Right cardiac atrium (tissue), 5 donors: ENCODE measurements at regions of chr9 and their contacts with region 1.

Region 1: DNA sequence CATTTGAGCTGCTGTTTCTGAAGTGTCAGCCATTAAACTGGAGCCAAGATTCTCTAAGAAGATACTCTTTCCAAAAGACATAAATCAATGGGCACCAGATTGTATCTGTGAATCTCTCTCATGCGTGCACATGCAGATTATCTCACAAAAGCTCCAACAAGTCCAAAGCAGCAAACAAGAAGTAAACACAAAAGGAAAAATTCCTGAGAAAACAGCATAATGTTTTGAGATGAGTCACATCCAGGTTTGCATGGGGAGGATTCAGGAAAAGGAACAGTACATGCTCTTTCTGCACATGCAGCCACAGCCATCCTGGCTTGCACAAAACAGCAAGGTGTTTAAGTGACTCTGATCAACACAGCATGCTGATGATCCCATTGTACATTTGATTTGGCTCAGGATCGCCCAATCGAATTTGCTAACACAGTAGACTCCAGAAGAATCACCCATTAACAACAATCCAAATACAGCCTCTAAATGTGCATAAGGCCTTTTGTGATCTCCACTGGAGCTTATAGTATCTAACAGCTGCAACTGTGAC is 143.1 kb downstream of the ELAVL2 start:
- DNase-seq: no peak
- ATAC-seq: no peak
- H3K4me3 ChIP-seq: no peak overlapping the region
- H3K27ac ChIP-seq: no peak overlapping the region
- H3K4me1 ChIP-seq: no peaks in the 10 kb centered on the region
- H3K27me3 ChIP-seq: no peaks in the 10 kb centered on the region

Region 2: DNA sequence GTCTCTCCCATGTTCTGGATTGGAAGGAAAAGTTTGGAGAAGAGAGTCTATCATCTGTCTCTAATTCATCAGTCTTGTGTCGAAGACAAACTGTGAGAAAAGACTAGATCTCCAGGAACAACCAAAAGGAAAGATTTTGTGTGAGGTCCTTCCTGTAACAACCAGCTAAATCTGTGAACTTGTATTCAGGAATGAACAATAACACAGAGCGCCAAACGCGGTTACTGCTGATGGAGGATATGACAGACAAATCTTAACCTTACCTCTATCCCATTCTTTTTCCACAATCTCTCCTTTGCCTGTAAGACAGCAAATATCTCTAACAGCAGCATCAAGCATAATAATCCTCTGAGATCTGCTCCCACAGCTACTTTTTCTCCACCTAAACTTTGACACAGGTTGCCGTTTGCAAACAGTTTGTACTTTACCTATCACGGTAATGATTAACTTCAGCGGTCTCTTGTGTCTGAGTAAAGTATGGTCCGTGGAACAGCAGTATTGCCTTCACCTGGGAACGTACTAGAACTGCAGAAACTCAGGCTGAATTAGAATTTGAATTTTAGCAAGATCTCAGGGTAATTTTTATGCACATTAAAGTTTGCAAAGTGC is 244.6 kb before region 1 on chr9:
- intact Hi-C with region 1: no loop called
- DNase-seq: no peak
- ATAC-seq: no peak
- H3K4me3 ChIP-seq: no peak overlapping the region
- H3K27ac ChIP-seq: no peak overlapping the region
- H3K4me1 ChIP-seq: no peaks in the 10 kb centered on the region
- H3K27me3 ChIP-seq: no peaks in the 10 kb centered on the region

Region 3: DNA sequence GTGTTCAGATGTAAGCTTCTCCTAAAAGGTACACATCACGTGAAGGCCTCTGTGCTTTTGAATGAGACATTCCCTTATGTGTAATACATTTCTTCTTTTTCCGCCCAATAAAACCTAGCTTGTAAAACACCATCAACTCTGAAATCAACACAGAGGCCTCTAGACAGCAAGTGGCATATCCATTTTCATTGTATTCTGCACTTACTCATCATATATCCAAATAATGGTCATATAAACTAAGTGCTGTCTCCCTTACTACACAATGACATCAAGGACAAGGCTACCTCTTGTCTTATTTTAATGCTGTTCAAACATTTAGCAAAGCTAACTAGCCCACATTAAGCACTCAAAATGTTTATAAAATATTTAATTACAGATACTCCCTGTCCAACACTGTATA is 34.5 kb after region 1 on chr9:
- intact Hi-C with region 1: no loop called
- DNase-seq: no peak
- ATAC-seq: no peak
- H3K4me3 ChIP-seq: no peak overlapping the region
- H3K27ac ChIP-seq: no peak overlapping the region
- H3K4me1 ChIP-seq: no peaks in the 10 kb centered on the region
- H3K27me3 ChIP-seq: no peaks in the 10 kb centered on the region

Region 4: DNA sequence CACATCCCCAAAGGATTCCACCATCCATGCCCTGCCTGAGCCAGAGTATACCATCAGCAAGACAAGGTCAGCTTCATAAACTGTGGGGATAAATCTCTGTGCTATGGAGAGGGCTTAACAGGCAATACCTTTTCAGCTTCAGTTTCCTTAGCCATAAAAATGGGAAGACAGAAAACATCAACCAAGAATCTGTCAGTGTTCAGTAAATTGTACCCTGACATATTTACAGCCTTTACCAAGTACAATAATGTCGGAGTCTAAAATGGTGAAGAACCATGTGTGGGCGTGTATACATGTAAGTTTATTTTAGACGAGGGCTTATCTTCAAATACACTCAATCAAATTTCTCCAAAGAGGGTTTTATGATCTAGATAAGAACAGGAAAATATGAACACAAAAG is 48.4 kb after region 1 on chr9:
- intact Hi-C with region 1: loop called in 1 of 4 experiments (anchors 10 kb)
- DNase-seq: no peak
- ATAC-seq: no peak
- H3K4me3 ChIP-seq: no peak overlapping the region
- H3K27ac ChIP-seq: no peak overlapping the region
- H3K4me1 ChIP-seq: no peaks in the 10 kb centered on the region
- H3K27me3 ChIP-seq: no peaks in the 10 kb centered on the region